Pancreas (tissue), 10 donors: ENCODE measurements at regions of chr17 and their contacts with region 1.

Region 1: GRCh38 chr17:31842183-31843069 is 16.6 kb downstream of the COPRS start:
- DNase-seq: peak; percentile 64 to 82 (median 71)
- ATAC-seq: peak; percentile 90 to 96 (median 92)
- H3K4me3 ChIP-seq: peak overlapping the region in 3 of 4 donors; percentile 10 to 28 (median 25)
- H3K27ac ChIP-seq: peak overlapping the region; percentile 1 to 77 (median 50)
- H3K4me1 ChIP-seq: peaks cover 4 to 11% (median 11%) of the 10 kb centered on the region in 3 donors
- H3K27me3 ChIP-seq: no peaks in the 10 kb centered on the region
- CTCF ChIP-seq: peak; percentile 95 to 98 (median 96)

Region 2: DNA sequence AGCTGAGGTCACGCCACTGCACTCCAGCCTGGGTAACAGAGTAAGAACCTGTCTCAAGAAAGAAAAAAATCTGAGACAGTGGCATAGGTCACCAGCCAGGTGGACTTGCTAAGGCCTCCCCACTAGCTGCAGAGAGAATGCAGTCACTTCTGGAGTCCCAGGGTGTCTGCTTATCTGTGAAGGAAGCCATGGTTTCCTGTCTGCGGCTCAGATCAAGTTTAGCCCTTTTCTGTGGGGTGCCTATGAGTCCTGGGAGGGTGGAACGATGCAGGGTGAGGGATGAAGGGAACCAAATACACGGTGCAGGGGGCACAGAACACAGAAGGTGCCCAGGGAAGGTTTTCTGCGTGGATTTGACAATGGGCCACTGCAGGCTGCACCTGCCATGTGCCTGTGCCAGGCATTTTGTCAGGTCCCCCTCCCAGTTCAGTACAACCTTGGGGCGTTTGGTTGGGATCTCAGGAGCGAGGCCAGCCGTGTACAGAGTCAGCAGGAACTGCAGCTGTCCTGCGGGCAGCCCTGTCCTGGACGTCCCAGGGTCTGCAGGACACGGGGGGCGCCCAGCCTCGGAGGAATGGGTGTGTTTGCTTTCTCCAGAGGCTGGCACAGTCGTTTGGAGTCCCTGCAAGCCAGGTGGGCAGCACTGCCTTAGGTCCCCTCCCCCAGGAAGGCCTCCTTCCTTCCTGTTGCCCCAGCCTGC is 409.2 kb before region 1 on chr17:
- intact Hi-C with region 1: loop called in 2 of 3 experiments (anchors 10 kb)
- DNase-seq: no peak
- ATAC-seq: no peak
- H3K4me3 ChIP-seq: no peak overlapping the region
- H3K27ac ChIP-seq: no peak overlapping the region
- H3K4me1 ChIP-seq: no peaks in the 10 kb centered on the region
- H3K27me3 ChIP-seq: no peaks in the 10 kb centered on the region
- CTCF ChIP-seq: no peak

Region 3: DNA sequence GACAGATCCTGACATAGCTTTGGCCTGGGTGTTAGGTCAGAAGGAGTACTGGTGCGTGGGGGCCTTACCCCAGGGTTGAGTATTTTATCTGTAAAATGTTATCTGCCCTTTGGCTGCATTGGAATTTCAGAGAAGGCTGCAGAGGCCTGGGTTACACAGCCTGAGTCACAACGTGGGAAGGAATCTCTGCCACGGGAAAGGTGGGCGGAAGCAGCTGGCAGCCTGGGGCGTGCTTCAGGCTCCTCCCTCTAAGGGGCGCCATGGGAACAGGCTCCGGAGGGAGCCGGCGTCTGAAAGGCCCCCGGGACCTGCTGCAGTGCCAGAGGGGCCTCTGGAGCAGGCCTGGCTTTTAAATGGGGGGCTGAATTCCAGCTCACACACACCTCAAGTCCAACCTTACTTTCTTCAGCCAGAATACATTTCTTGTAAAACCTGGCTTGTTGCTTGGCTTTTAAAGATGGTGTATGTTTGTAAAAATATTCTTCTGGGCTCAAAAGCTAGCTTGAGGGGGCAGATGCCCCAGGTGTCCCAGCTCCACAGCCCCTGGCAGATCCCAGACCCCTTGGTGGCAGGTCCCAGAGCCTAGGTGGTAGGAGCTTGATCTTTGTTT is 308.8 kb before region 1 on chr17:
- intact Hi-C with region 1: no loop called
- DNase-seq: peak in 1 of 6 donors; percentile 36
- ATAC-seq: peak in 3 of 4 donors; percentile 33 to 66 (median 47)
- H3K4me3 ChIP-seq: no peak overlapping the region
- H3K27ac ChIP-seq: no peak overlapping the region
- H3K4me1 ChIP-seq: peaks cover 0 to 4% (median 0%) of the 10 kb centered on the region in 3 donors
- H3K27me3 ChIP-seq: no peaks in the 10 kb centered on the region
- CTCF ChIP-seq: no peak

Region 4: GRCh38 chr17:31558748-31559644 is 283.4 kb before region 1 on chr17:
- intact Hi-C with region 1: loop called in 2 of 3 experiments (anchors 5 kb)
- DNase-seq: peak; percentile 73 to 92 (median 82)
- ATAC-seq: peak; percentile 85 to 92 (median 89)
- H3K4me3 ChIP-seq: peak overlapping the region; percentile 44 to 67 (median 58)
- H3K27ac ChIP-seq: peak overlapping the region; percentile 76 to 90 (median 80)
- H3K4me1 ChIP-seq: peaks cover 7 to 35% (median 25%) of the 10 kb centered on the region in 3 donors
- H3K27me3 ChIP-seq: no peaks in the 10 kb centered on the region
- CTCF ChIP-seq: peak; percentile 62 to 77 (median 70)

Region 5: DNA sequence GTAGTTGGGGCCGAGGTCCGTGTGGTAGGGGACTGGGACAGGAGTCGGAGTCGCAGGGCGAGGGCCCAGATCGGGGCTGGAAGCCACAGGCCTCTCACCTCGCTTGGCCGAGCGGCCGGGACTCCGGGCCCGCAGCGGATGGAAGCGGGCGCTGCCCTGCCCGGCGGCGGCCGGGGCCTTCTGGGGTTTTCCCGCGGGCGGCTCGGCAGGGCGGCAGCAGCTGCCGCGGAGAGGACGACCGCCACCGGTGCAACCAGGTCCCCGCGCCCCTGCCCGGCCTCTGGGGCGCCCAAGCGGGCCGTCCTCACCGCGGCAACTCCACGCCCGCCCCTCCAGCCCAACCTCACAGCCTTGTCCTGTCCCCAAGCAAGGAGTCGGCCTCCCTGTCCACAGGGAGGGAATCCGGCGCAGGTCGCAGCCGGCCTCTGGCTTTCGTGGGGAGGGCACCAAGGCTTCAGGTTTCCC is 74.7 kb after region 1 on chr17:
- intact Hi-C with region 1: no loop called
- DNase-seq: peak in 2 of 6 donors; percentile 64 to 70
- ATAC-seq: peak in 3 of 4 donors; percentile 52 to 85 (median 75)
- H3K4me3 ChIP-seq: peak overlapping the region in 1 of 4 donors; percentile 36
- H3K27ac ChIP-seq: no peak overlapping the region
- H3K4me1 ChIP-seq: no peaks in the 10 kb centered on the region
- H3K27me3 ChIP-seq: peaks cover 0 to 3% (median 0%) of the 10 kb centered on the region in 4 donors
- CTCF ChIP-seq: no peak